Esophagus muscularis mucosa (tissue), 4 donors: ENCODE measurements at regions of chr17 and their contacts with region 1.

Region 1: GRCh38 chr17:59378458-59379074 is 47.1 kb downstream of the YPEL2 start:
- DNase-seq: no peak
- H3K4me3 ChIP-seq: no peak overlapping the region
- H3K27ac ChIP-seq: peak overlapping the region; percentile 75 to 92 (median 91)
- H3K4me1 ChIP-seq: peaks cover 88 to 95% (median 93%) of the 10 kb centered on the region in 4 donors
- H3K27me3 ChIP-seq: no peaks in the 10 kb centered on the region
- CTCF ChIP-seq: no peak
- EP300 ChIP-seq: no peak
- POLR2A ChIP-seq: no peak

Region 2: GRCh38 chr17:59423137-59423703 is 44.7 kb after region 1 on chr17:
- intact Hi-C with region 1: loop called (anchors 5 kb)
- DNase-seq: no peak
- H3K4me3 ChIP-seq: no peak overlapping the region
- H3K27ac ChIP-seq: peak overlapping the region; percentile 82 to 88 (median 86)
- H3K4me1 ChIP-seq: peaks cover 59 to 91% (median 76%) of the 10 kb centered on the region in 4 donors
- H3K27me3 ChIP-seq: no peaks in the 10 kb centered on the region
- CTCF ChIP-seq: no peak
- EP300 ChIP-seq: no peak
- POLR2A ChIP-seq: no peak

Region 3: DNA sequence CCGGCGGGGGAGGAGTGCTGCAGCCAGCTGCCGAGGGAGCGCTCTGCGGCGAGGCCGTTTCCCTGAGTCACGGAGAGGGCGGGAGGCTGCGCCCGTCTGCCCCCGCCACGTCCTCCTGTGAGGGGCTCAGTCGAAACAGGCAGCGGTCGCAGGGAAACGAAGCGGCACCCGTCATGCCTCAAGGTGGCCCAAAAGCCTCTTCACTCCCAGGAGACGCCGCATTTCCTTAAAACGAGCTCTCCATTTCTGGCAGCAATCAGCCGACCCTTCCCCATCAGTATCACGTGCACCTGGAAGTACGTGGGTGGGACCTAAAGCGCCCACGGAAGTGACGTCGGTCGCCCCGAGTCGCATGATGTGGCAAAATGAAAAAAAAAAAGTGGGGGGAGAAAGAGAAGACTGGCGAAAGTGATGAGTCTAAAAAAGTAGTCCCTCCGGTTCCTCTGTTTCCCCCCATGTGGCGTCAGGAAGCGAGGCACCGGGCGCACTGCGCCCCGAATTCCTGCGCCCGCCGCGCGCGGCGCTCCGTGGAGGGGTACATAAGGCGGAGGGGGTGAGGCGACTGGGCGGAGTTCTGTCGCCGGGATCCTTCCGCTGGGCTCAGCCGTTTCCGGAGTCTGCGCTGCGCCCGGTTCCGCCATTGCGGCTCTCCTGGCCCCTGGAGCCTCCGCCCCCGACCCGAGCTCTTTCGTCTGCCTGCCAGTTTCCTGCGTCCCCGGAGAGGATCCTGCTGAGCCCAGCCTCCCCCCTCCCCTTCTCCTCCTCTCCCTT is 240.9 kb after region 1 on chr17 and contains the start of gene CLTC:
- intact Hi-C with region 1: no loop called
- DNase-seq: peak; percentile 98
- H3K4me3 ChIP-seq: peak within 1 kb of the TSS; percentile 95 to 98 (median 96)
- H3K27ac ChIP-seq: peak within 1 kb of the TSS; percentile 98 to 100 (median 99)
- H3K4me1 ChIP-seq: peaks cover 40 to 51% (median 47%) of the 10 kb centered on the region in 4 donors
- H3K27me3 ChIP-seq: no peaks in the 10 kb centered on the region
- CTCF ChIP-seq: no peak
- EP300 ChIP-seq: peak; percentile 2
- POLR2A ChIP-seq: peak; percentile 77
- total RNA-seq, gene CLTC: 206 to 283 (median 252) TPM